ENCODE measurements at regions of chr1 and their contacts with region 1.

Region 1: DNA sequence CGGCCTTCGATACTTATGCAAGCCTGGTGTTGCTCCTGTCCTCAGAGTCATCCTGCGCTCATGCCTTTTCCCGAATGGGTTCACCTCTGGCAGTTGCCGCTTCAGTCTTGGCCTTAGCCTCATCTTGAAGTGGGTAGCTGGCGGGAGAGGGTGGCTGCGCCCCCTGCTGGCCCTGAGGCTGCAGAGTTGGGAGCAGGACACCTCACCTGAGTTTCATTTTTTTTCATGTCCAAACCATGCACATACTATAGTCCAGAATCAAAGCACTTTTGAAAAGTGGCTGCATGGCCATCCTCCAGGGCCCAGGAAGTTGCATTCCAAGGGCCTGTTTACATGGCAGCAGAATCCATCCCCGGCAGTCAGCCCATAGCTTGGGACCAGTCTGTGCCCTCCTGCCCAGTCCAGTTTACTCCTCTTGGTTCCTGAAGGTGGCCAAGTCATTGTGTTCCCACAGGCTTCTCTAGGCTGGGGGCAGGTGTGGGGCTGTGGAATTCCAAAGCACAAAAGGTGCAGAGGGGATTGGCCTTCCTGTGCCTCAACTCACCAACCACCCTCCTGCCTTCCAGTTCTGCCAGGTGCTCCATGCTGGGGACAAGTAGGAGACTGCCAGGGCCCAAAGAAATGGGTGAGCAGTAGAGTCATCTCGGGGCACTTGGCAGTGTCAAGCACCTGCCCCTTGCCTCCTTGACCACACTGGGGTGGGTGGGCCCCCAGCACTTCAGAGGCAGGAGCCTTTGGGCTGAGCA is 44.0 kb downstream of the YARS1 start:
- DNase-seq: peak; percentile 87
- ATAC-seq: peak; percentile 75
- H3K4me3 ChIP-seq: no peak overlapping the region
- H3K27ac ChIP-seq: no peak overlapping the region
- H3K4me1 ChIP-seq: peaks cover 24% of the 10 kb centered on the region
- H3K27me3 ChIP-seq: no peaks in the 10 kb centered on the region
- CTCF ChIP-seq: peak; percentile 97

Region 2: GRCh38 chr1:32828341-32828740 is 55.1 kb after region 1 on chr1:
- CTCF ChIA-PET with region 1: interaction called, 12 read pairs
- POLR2A ChIA-PET with region 1: no interaction called
- intact Hi-C with region 1: no loop called
- DNase-seq: peak; percentile 37
- ATAC-seq: no peak
- H3K4me3 ChIP-seq: no peak overlapping the region
- H3K27ac ChIP-seq: no peak overlapping the region
- H3K4me1 ChIP-seq: no peaks in the 10 kb centered on the region
- H3K27me3 ChIP-seq: no peaks in the 10 kb centered on the region
- CTCF ChIP-seq: peak; percentile 52

Measured in PC-3 (cell line).